ENCODE measurements at regions of chr2 and their contacts with region 1.

Region 1: GRCh38 chr2:24977631-24978030 is 5.9 kb upstream of the DNAJC27 start:
- DNase-seq: no peak
- H3K4me3 ChIP-seq: no peak overlapping the region
- H3K27ac ChIP-seq: peak overlapping the region in 8 of 59 donors; percentile 0 to 68 (median 12)
- H3K27me3 ChIP-seq: no peaks in the 10 kb centered on the region
- CTCF ChIP-seq: no peak

Region 2: DNA sequence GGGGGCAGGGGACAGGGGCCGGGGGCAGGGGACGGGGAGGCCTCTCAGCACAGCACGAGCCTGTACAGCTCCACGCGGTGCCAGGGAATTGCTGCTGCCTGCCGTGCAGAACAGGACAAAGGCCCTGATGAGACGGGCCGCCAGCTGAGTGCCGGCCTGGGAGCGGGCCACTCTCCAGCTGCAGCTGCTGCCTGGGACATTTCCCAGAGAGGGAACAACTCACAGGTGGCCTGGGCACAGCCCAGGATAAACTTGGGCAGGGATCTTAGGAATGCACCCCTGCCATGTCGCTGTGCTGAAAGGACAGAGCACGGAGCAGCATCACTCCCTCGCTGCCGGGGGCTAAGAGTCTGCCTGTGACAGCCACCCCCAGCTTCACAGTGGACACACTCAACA is 145.6 kb before region 1 on chr2:
- intact Hi-C with region 1: no loop called
- DNase-seq: peak; percentile 40 to 94 (median 90)
- H3K4me3 ChIP-seq: peak overlapping the region in 3 of 59 donors; percentile 5 to 31 (median 21)
- H3K27ac ChIP-seq: peak overlapping the region in 57 of 59 donors; percentile 38 to 95 (median 86)
- H3K27me3 ChIP-seq: no peaks in the 10 kb centered on the region
- CTCF ChIP-seq: peak in 4 of 56 donors; percentile 12 to 30 (median 13)

Region 3: DNA sequence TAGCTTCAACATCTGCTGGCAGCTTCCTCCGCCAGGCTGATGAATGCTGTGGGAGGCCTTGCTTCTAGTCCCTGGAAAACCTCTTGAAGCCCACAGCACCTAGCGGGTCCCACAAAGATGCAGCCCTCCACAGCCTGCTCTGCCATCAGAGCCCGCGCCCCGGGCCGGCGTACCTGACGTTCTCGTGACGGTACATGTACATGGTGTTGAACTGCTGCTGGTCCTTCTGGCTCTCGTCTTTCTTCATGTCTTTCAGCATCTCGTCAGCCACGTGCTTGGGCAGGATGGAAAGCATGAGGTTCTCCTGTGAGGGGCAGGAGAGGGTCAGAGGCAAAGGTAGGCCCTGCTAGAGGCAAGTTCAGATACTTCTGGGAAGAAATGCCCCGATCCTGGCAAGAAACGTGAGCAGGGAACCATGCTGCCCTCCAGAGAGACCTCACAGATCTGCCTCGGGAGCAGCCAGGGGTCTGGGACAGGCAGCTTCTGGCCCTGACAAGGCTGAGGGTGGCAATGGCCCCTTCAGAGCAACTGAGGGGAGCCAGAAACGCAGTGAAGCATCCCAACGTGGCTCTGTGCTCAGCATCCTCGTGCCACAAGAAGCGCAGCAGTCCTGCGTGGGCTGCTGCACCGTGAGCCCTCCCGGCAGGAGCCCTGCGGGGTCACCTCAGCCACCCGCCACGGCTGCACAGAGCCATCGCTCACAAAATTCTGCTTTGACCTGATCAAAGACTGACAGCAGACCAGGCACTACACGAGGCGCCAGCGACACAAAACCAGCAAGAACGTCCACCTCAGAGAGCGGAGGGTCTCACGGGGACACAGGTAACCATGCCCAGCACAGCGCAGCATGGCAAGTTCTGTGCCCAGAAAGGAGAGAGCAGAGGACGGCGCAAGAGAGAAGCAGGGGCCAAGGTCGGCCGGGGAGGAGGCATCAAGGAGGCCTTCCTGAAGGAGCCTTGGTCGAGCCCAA is 135.3 kb before region 1 on chr2:
- intact Hi-C with region 1: no loop called
- DNase-seq: peak in 1 of 10 donors; percentile 31
- H3K4me3 ChIP-seq: no peak overlapping the region
- H3K27ac ChIP-seq: peak overlapping the region in 17 of 59 donors; percentile 5 to 78 (median 59)
- H3K27me3 ChIP-seq: no peaks in the 10 kb centered on the region
- CTCF ChIP-seq: no peak

Region 4: DNA sequence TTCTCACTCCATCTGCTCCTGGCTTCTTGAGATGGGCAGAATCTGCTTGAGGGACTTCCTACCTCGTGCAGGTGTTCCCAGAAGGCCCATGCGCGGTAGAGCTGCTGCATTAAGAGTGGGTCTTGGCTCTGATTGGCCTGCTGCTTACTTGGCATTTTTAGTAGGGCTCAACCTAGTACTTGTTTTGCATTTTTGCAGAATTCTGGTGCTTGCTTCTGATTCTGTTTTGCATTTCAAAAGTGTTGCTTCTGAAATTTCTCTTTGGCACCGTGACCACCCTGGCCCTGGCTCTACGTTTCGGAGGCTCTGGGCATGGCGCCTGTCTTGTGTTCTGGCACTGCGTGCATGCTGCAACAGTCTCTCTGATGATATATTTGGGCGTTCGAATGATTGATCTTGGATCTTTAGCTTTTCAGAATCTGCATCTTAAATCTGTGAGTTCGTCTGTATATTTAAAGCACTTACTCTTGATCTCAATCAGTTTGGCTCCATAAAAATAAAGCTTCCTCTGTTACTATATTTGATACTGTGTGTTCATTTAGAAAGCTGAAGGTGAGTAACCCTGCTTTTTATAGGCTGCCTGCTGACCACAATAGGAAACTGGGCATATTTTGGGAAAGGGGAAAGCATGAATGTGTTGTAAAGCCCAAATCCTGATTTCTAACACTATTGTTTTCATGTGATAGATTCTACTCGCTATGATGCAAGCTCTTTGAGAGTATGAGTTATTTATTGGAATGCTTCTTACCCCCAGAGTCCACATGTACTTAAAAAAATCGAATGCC is 86.4 kb after region 1 on chr2:
- intact Hi-C with region 1: loop called (anchors 5 kb)
- DNase-seq: peak in 9 of 10 donors; percentile 49 to 81 (median 73)
- H3K4me3 ChIP-seq: peak overlapping the region in 33 of 59 donors; percentile 1 to 39 (median 21)
- H3K27ac ChIP-seq: peak overlapping the region; percentile 43 to 98 (median 93)
- H3K27me3 ChIP-seq: no peaks in the 10 kb centered on the region
- CTCF ChIP-seq: no peak

Region 5: DNA sequence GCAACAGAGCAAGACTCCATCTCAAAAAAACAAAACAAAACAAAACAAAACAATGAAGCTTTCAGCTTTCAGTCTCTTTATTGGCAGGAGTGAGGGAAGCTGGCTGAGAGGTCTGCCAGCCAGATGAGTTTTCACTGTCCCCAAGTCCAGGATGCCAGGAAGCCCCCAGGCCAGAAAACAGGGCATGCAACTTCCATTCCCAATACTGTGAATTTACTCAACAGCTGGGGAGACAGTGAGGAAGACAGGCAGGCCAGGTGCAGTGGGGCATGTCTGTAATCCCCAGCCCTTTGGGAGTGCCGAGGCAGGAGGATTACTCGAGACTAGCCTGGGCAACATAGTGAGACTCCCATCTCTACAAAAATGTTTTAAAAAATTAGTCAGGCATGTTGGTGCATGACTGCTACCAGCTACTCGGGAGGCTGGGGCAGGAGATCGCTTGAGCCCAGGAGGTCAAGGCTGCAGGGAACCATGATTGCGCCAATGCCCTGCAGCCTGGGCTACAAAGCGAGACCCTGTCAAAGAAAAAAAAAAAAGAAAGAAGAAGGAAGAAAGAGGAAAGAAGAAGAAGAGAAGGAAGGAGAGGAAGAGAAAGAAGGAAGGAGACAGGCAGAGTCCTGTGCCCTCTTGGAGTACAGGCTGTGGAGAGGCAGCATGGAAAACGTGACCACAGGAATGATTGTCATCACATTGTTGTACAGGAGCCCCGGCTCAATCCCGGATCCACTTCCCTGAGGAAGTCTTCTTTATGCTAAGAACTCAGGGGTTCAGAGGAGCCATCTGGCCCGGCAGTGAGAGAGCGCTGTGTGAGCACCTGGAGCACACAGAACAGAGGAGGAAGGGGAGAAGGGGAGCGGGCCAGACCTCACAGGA is 219.9 kb after region 1 on chr2:
- intact Hi-C with region 1: loop called (anchors 2 to 5 kb)
- DNase-seq: no peak
- H3K4me3 ChIP-seq: peak overlapping the region in 1 of 59 donors; percentile 6
- H3K27ac ChIP-seq: peak overlapping the region in 7 of 59 donors; percentile 0 to 71 (median 37)
- H3K27me3 ChIP-seq: no peaks in the 10 kb centered on the region
- CTCF ChIP-seq: no peak

Measured in dorsolateral prefrontal cortex (tissue), 120 donors.